ENCODE measurements at regions of chr19 and their contacts with region 1.

Region 1: DNA sequence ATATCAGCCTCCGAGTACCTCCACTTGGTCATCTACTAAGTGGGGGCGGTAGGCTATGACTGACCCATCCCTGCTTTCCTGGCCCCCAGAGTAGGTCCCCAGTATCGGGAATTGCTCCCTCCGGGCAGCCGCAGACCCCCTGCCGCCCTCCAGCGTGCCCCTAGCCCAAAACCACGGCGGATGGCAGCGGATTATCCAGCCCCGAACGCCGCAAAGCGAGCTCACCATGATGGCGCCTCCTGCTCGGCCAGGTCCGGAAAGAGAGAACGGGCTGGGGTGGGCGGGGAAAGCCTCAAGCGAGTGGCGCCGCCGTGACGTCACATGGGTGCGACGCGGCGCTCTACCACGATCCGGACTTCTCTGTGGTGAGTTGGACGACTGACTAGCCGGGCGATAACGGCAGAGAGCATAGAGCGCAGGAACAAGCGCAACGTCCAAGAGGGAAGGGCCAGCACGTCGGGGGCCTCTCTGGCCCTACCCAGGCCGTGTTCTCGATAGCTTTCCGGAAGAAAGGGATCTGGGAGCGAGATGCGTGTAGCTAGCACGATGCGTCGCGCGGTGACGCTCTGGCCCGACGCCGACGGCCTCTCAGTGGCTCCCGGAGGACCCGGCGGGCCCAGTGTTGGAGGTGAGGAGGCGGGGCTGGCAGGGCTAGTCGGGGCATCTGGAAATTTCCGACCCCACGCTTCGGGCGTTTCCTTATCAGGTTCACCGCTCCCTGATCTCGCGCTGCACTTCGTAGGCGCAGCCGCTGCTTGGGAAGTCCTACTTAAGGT is at the starts of genes RPL18 and SPHK2:
- H3K4me3 ChIP-seq: peak within 1 kb of the TSS; percentile 76
- H3K27ac ChIP-seq: peak within 1 kb of the TSS; percentile 100
- H3K4me1 ChIP-seq: peaks cover 34% of the 10 kb centered on the region
- CTCF ChIP-seq: 0 out of 2 replicates have a peak, but pooled peaks have one; percentile 24

Region 2: GRCh38 chr19:48363810-48364563 is 255.1 kb before region 1 on chr19 and contains the starts of genes SYNGR4 and TMEM143:
- CTCF ChIA-PET with region 1: no interaction called
- POLR2A ChIA-PET with region 1: interaction called, 14 read pairs
- H3K4me3 ChIP-seq: peak within 1 kb of the TSS; percentile 54
- H3K27ac ChIP-seq: peak within 1 kb of the TSS; percentile 89
- H3K4me1 ChIP-seq: peaks cover 4% of the 10 kb centered on the region; the same call in 1 of the 2 replicates
- CTCF ChIP-seq: peak; percentile 34; the same call in 1 of the 2 replicates

Region 3: DNA sequence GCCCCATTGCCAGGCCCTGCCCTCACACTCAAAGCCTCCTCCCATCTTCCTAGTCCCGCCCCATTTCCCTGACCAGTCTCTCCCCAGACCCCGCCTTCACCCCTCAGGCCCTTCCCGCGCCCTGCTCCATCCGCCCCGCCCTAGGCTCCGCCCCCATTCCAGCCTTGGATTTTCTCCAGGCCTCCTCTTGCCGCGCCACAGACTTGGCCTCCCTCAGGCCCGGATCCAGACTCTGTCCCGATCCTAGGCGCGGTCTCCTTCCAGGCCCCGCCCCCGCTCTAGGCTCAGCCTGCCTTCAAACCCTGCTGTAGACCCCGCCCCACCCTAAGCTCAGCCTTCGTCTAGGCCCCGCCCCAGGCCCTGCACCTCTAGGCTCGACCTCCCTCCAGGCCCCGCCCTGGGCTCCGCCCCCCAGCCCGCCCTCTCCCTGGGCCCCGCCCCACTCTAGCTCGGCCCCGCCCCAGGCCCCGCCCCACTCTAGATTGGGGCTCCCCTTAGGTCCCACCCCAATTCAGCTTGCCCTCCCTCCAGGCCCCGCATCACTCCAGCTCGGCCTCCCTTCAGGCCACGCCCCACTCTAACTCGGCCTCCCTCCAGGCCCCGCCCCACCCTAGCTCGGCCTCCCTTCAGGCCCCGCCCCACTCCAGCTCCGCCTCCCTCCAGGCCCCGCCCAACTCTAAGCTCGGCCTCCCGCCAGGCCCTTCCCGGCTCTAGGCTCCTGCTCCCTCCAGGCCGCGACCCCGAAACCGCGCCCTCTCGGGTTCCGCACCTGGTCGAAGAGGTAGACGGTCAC is 126.0 kb before region 1 on chr19:
- CTCF ChIA-PET with region 1: interaction called, 3 read pairs
- POLR2A ChIA-PET with region 1: interaction called, 13 read pairs
- H3K4me3 ChIP-seq: peak overlapping the region; percentile 23
- H3K27ac ChIP-seq: no peak overlapping the region
- H3K4me1 ChIP-seq: peaks cover 6% of the 10 kb centered on the region
- CTCF ChIP-seq: no peak

Region 4: GRCh38 chr19:48588670-48589399 is 30.3 kb before region 1 on chr19:
- CTCF ChIA-PET with region 1: interaction called, 13 read pairs
- POLR2A ChIA-PET with region 1: interaction called, 10 read pairs
- H3K4me3 ChIP-seq: peak overlapping the region; percentile 47
- H3K27ac ChIP-seq: no peak overlapping the region
- H3K4me1 ChIP-seq: no peaks in the 10 kb centered on the region
- CTCF ChIP-seq: peak; percentile 100

Region 5: DNA sequence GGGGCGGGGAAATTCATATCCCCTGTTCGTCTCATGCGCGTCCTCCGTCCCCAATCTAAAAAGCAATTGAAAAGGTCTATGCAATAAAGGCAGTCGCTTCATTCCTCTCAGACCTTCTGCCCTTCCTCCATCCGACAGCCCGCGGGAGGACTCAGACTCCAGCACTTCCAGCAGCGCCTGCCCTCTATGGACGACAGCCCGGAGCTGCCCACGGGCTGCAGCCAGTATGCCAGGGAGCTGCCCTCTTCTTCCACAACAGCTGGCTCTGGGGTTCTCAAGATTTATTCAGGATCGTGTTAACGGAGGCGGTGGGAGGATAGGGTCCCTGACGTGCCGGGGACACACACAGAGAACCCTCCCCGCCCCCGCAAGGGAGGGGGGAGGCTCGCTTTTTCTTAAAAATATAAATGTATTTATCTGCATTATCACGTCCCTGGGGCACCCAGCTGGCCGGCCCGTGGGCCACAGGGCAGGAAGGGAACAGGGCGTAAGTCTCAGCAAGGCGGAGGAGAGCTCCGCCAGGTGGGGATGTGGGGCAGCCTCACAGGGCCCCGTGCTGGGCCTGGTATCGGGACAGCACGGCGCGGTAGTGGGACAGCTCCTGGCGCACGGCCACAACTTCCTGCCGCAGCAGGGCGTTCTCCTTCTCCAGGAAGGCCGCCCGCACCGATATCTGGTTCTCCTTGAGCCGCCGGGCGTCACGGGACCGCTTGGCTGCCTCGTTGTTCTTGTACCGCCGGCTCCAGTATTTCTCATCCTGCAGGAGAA is 11.4 kb after region 1 on chr19:
- CTCF ChIA-PET with region 1: interaction called, 3 read pairs
- POLR2A ChIA-PET with region 1: interaction called, 97 read pairs
- H3K4me3 ChIP-seq: no peak overlapping the region
- H3K27ac ChIP-seq: no peak overlapping the region
- H3K4me1 ChIP-seq: peaks cover 14% of the 10 kb centered on the region
- CTCF ChIP-seq: no peak

Region 6: GRCh38 chr19:48646001-48646721 is 27.1 kb after region 1 on chr19 and contains the start of gene CA11:
- CTCF ChIA-PET with region 1: interaction called, 5 read pairs
- POLR2A ChIA-PET with region 1: interaction called, 39 read pairs
- H3K4me3 ChIP-seq: peak within 1 kb of the TSS; percentile 44
- H3K27ac ChIP-seq: peak within 1 kb of the TSS; percentile 70
- H3K4me1 ChIP-seq: peaks cover 9% of the 10 kb centered on the region
- CTCF ChIP-seq: peak; percentile 96

Region 7: GRCh38 chr19:48738557-48739399 is 119.7 kb after region 1 on chr19:
- CTCF ChIA-PET with region 1: no interaction called
- POLR2A ChIA-PET with region 1: interaction called, 12 read pairs
- H3K4me3 ChIP-seq: peak overlapping the region; percentile 36
- H3K27ac ChIP-seq: peak overlapping the region; percentile 77; the same call in 1 of the 2 replicates
- H3K4me1 ChIP-seq: peaks cover 5% of the 10 kb centered on the region
- CTCF ChIP-seq: no peak